HCT116 (cell line): ENCODE measurements at regions of chr3 and their contacts with region 1.

Region 1: GRCh38 chr3:197068077-197068476 is 38.5 kb upstream of the MELTF start:
- DNase-seq: no peak
- ATAC-seq: no peak
- H3K4me3 ChIP-seq: no peak overlapping the region
- H3K27ac ChIP-seq: no peak overlapping the region
- H3K4me1 ChIP-seq: no peaks in the 10 kb centered on the region
- H3K27me3 ChIP-seq: no peaks in the 10 kb centered on the region
- CTCF ChIP-seq: no peak
- POLR2A ChIP-seq: no peak
- RAD21 ChIP-seq: no peak

Region 2: GRCh38 chr3:196813903-196814302 is 254.2 kb before region 1 on chr3:
- CTCF ChIA-PET with region 1: no interaction called
- POLR2A ChIA-PET with region 1: no interaction called
- RAD21 ChIA-PET with region 1: no interaction called
- intact Hi-C with region 1: loop called (anchors 5 kb)
- DNase-seq: no peak
- ATAC-seq: no peak
- H3K4me3 ChIP-seq: no peak overlapping the region
- H3K27ac ChIP-seq: no peak overlapping the region
- H3K4me1 ChIP-seq: no peaks in the 10 kb centered on the region
- H3K27me3 ChIP-seq: no peaks in the 10 kb centered on the region
- CTCF ChIP-seq: no peak
- POLR2A ChIP-seq: no peak
- RAD21 ChIP-seq: no peak

Region 3: DNA sequence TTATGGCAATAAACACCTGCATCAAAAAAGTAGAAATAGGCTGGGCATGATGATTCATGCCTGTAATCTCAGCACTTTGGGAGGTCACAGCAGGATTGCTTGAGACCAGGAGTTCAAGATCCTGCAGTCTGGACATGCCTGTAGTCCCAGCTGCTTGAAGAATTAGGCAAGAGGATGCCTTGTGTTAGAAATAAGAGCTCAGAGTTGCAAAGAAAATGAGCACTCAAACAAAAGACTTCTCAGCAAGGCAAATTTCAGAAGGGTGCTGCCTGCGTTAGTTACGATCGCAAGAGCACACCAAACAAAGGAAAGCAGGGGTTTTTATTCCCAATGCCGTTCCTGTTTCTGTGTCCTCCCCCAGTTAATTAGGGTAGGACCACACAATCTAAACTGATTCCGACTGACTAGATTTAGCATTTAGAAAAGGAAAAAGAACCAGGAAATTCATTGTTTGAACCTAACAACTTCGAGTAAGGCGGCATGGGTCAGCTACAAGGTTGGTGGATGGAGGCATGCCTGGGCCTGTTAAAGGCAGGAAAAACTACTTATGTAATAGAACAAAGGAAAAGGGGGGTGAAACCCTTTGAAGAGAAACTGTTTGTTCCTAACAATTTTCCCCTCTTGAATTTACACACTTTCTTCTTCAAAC is 174.8 kb after region 1 on chr3:
- CTCF ChIA-PET with region 1: no interaction called
- POLR2A ChIA-PET with region 1: no interaction called
- RAD21 ChIA-PET with region 1: no interaction called
- intact Hi-C with region 1: no loop called
- DNase-seq: no peak
- ATAC-seq: no peak
- H3K4me3 ChIP-seq: no peak overlapping the region
- H3K27ac ChIP-seq: no peak overlapping the region
- H3K4me1 ChIP-seq: no peaks in the 10 kb centered on the region
- H3K27me3 ChIP-seq: no peaks in the 10 kb centered on the region
- CTCF ChIP-seq: no peak
- POLR2A ChIP-seq: no peak
- RAD21 ChIP-seq: no peak